Naive thymus-derived CD4-positive, alpha-beta T cell (primary cell): ENCODE measurements at regions of chr5 and their contacts with region 1.

Region 1: DNA sequence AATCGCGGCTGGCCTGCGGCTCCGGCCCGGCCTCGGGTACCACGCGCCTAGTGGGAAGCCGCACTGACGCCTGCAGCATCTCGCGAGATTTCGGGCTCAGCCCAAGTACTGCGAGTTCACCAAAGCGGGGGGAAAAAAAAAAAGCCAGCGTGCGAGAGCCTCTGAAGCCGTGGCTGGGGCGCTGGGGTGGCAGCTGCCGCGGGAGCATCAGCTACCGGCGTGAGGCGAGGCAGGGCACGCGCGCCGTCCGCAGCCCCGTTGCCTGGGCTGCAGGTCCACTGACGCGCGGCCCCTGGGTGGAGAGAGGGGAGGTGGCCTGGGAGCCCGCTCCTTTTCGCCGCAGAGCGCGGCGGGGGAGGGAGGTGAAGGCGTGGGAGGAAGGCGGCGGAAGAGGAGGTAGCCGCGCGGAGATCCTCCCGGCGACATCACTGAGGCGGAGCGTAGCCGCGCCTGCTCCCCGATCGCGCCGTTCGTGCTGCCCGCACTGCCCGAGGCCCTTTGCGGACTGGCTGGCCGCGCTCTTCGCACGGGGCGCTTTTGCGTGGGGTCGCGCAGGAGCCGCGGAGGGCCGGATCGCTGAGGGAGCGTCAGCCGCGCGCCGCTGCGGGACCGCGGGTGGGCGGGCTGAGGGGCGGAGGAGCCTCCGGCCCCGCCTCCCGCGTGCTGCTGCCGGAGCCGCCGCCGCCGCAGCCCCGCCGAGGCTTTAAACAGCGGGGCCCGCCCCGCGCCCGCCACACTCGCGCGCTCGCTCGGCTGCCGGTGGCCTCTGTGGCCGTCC is at the start of gene SLC12A2:
- DNase-seq: peak; percentile 85 to 98 (median 97)
- ATAC-seq: peak; percentile 83
- H3K4me3 ChIP-seq: peak within 1 kb of the TSS; percentile 76
- H3K4me3 Mint-ChIP-seq: peak within 1 kb of the TSS; percentile 89 to 97 (median 94)
- H3K27ac ChIP-seq: peak within 1 kb of the TSS; percentile 89
- H3K27ac Mint-ChIP-seq: peak within 1 kb of the TSS; percentile 89 to 98 (median 92)
- H3K4me1 ChIP-seq: peaks cover 20 to 41% of the 10 kb centered on the region in 2 donors
- H3K4me1 Mint-ChIP-seq: peaks cover 44 to 78% (median 69%) of the 10 kb centered on the region in 7 donors
- H3K27me3 ChIP-seq: no peaks in the 10 kb centered on the region
- H3K27me3 Mint-ChIP-seq: no peaks in the 10 kb centered on the region
- total RNA-seq, gene SLC12A2: 8.2 to 17.3 (median 11.3) TPM

Region 2: DNA sequence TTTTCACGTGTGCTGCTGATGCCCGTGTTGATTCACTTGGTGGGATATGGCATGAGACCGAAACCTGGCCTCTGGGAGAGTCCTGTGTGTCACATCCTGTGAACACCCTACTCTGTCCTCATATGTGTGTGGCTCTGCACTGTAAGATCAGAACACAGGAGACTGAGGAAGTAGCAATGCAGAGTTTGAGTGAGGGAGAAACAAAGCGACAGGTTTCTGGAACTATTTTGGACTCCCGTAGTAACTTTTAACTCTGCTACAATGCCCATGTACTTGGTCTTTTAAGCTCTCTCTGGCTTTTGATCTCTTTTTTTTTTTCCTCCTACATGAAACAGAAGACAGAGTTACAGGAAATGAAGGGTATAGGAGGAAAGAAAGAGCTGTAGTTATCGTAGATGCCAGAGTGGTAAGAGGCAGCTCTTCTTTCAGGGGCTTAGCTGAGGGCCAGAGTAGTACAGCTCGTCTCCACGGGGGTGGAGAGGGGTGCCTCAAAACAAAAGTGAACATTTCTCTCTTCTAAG is 1633.4 kb before region 1 on chr5:
- CTCF ChIA-PET with region 1: no interaction called
- POLR2A ChIA-PET with region 1: interaction called, 3 read pairs
- intact Hi-C with region 1: loop called in 1 of 2 experiments (anchors 10 kb)
- DNase-seq: peak in 8 of 9 donors; percentile 48 to 75 (median 64)
- ATAC-seq: peak; percentile 87
- H3K4me3 ChIP-seq: peak overlapping the region; percentile 47
- H3K4me3 Mint-ChIP-seq: peak overlapping the region; percentile 75 to 94 (median 88)
- H3K27ac ChIP-seq: peak overlapping the region; percentile 77
- H3K27ac Mint-ChIP-seq: peak overlapping the region; percentile 96 to 100 (median 99)
- H3K4me1 ChIP-seq: peaks cover 11 to 57% of the 10 kb centered on the region in 2 donors
- H3K4me1 Mint-ChIP-seq: peaks cover 32 to 90% (median 75%) of the 10 kb centered on the region in 7 donors
- H3K27me3 ChIP-seq: no peaks in the 10 kb centered on the region
- H3K27me3 Mint-ChIP-seq: no peaks in the 10 kb centered on the region

Region 3: GRCh38 chr5:126745259-126745992 is 1337.8 kb before region 1 on chr5:
- CTCF ChIA-PET with region 1: no interaction called
- POLR2A ChIA-PET with region 1: no interaction called
- intact Hi-C with region 1: loop called in 1 of 2 experiments (anchors 10 kb)
- DNase-seq: no peak
- ATAC-seq: no peak
- H3K4me3 ChIP-seq: no peak overlapping the region
- H3K4me3 Mint-ChIP-seq: no peak overlapping the region
- H3K27ac ChIP-seq: no peak overlapping the region
- H3K27ac Mint-ChIP-seq: peak overlapping the region in 1 of 9 donors; percentile 26
- H3K4me1 ChIP-seq: peaks cover 4 to 13% of the 10 kb centered on the region in 2 donors
- H3K4me1 Mint-ChIP-seq: peaks cover 11 to 30% (median 19%) of the 10 kb centered on the region in 7 donors
- H3K27me3 ChIP-seq: no peaks in the 10 kb centered on the region
- H3K27me3 Mint-ChIP-seq: peaks cover 0 to 4% (median 0%) of the 10 kb centered on the region in 5 donors

Region 4: DNA sequence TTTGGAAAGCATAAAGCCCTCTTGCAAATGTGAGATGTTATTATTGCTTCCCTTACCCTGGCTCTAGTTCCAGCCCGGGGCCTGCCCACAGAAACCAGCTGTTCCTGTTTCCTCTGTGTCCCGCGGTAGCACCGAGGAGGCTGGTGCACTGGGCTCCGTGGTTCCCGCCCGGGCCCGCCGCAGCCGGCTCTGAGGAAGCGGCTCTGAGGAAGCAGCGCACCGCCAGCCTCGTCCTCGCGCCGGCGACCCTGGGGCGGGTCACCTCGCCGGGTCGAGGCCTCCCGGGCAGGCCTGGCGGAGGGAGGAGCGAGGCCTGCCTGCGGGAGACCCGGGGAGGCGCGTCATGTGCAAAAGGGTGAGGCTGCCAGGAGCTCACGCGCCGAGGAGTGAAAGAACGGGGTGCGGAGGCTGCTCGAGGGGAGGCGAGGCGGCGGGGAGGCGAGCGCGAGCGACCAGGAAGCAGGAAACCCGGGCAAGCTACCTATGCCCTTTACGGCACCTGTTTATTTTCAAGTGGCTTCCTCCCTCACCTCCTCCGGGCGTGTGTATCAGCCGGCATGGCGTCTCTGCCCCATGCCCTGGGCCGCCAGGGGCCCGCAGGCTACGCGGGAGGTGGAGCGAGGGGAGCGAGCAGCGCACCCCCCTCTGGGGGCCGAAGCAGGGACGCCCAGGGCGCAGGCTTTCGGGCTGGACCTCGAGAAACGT is 853.9 kb before region 1 on chr5:
- CTCF ChIA-PET with region 1: no interaction called
- POLR2A ChIA-PET with region 1: no interaction called
- intact Hi-C with region 1: loop called in 1 of 2 experiments (anchors 2 kb)
- DNase-seq: peak; percentile 28 to 68 (median 64)
- ATAC-seq: peak; percentile 83
- H3K4me3 ChIP-seq: peak overlapping the region; percentile 66
- H3K4me3 Mint-ChIP-seq: peak overlapping the region; percentile 73 to 88 (median 80)
- H3K27ac ChIP-seq: peak overlapping the region; percentile 62
- H3K27ac Mint-ChIP-seq: peak overlapping the region; percentile 36 to 88 (median 84)
- H3K4me1 ChIP-seq: peaks cover 0 to 15% of the 10 kb centered on the region in 2 donors
- H3K4me1 Mint-ChIP-seq: peaks cover 7 to 28% (median 18%) of the 10 kb centered on the region in 7 donors
- H3K27me3 ChIP-seq: no peaks in the 10 kb centered on the region
- H3K27me3 Mint-ChIP-seq: peaks cover 0 to 5% (median 0%) of the 10 kb centered on the region in 5 donors

Region 5: DNA sequence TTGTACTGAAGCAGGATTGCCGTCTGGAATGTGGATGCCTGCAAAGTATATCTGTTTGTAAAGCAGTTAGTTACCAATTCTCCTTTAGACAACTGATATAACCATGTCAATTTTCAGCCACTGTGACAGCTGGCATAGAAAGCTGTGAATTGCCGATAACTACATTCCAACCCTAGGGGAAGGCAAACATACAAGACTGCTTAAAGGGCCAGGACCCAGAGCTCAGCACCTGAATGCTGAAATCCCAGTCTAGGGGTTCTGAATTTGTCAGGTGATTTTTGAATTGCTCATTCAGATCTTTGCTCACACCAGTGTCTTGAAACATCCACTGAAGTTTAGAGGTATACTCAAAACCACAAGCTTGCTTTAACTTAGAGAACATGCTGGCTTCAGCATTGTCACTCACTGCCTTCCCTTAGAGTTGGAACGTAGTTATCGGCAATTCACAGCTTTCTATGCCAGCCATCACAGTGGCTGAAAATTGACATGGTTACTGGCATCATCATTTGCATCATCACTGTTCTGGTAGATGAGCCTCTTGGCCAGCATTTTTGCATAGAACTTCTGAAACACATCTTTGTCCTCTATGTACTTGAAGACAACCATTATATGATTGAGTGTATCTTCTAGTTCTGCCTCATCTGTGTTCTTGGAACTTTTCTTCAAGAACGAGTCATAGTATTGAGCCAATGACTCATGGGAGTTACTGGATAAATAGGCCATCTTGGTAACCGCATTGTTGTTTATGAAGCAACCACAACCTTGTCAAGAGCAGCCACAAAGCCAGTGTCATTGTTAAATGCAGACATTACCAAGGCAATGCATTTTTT is 297.9 kb before region 1 on chr5:
- CTCF ChIA-PET with region 1: no interaction called
- POLR2A ChIA-PET with region 1: no interaction called
- intact Hi-C with region 1: loop called in 1 of 2 experiments (anchors 1 kb)
- DNase-seq: peak in 1 of 9 donors; percentile 34
- ATAC-seq: peak; percentile 79
- H3K4me3 ChIP-seq: no peak overlapping the region
- H3K4me3 Mint-ChIP-seq: peak overlapping the region in 1 of 10 donors; percentile 73
- H3K27ac ChIP-seq: no peak overlapping the region
- H3K27ac Mint-ChIP-seq: peak overlapping the region in 1 of 9 donors; percentile 96
- H3K4me1 ChIP-seq: peaks cover 0 to 4% of the 10 kb centered on the region in 2 donors
- H3K4me1 Mint-ChIP-seq: peaks cover 0 to 45% (median 0%) of the 10 kb centered on the region in 7 donors
- H3K27me3 ChIP-seq: no peaks in the 10 kb centered on the region
- H3K27me3 Mint-ChIP-seq: peaks cover 3 to 24% (median 16%) of the 10 kb centered on the region in 5 donors

Region 6: GRCh38 chr5:127849891-127850290 is 233.3 kb before region 1 on chr5:
- CTCF ChIA-PET with region 1: no interaction called
- POLR2A ChIA-PET with region 1: no interaction called
- intact Hi-C with region 1: no loop called
- DNase-seq: no peak
- ATAC-seq: no peak
- H3K4me3 ChIP-seq: no peak overlapping the region
- H3K4me3 Mint-ChIP-seq: no peak overlapping the region
- H3K27ac ChIP-seq: no peak overlapping the region
- H3K27ac Mint-ChIP-seq: no peak overlapping the region
- H3K4me1 ChIP-seq: no peaks in the 10 kb centered on the region
- H3K4me1 Mint-ChIP-seq: no peaks in the 10 kb centered on the region
- H3K27me3 ChIP-seq: no peaks in the 10 kb centered on the region
- H3K27me3 Mint-ChIP-seq: no peaks in the 10 kb centered on the region

Region 7: DNA sequence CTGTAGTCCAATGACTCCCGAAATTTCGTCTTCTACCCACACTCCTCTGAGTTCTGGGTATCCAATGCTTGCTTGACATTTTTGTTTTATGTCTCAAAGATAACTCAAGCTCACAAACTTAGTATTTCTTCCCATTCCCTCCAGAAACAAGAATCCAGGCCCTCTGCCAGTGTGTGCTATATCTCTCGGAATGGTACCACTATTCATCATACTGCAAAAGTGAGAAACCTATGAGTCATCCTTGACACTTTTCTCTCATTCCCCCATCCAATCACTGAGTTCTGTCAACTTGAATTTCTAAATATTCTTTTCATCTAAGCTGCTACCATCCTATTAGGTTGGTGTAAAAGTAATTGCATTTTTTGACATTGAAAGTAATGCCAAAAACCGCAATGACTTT is 10.1 kb after region 1 on chr5:
- CTCF ChIA-PET with region 1: no interaction called
- POLR2A ChIA-PET with region 1: interaction called, 3 read pairs
- intact Hi-C with region 1: loop called in 1 of 2 experiments (anchors 1 kb)
- DNase-seq: no peak
- ATAC-seq: no peak
- H3K4me3 ChIP-seq: no peak overlapping the region
- H3K4me3 Mint-ChIP-seq: no peak overlapping the region
- H3K27ac ChIP-seq: no peak overlapping the region
- H3K27ac Mint-ChIP-seq: peak overlapping the region in 1 of 9 donors; percentile 26
- H3K4me1 ChIP-seq: no peaks in the 10 kb centered on the region
- H3K4me1 Mint-ChIP-seq: peaks cover 4 to 28% (median 21%) of the 10 kb centered on the region in 7 donors
- H3K27me3 ChIP-seq: no peaks in the 10 kb centered on the region
- H3K27me3 Mint-ChIP-seq: no peaks in the 10 kb centered on the region

Region 8: DNA sequence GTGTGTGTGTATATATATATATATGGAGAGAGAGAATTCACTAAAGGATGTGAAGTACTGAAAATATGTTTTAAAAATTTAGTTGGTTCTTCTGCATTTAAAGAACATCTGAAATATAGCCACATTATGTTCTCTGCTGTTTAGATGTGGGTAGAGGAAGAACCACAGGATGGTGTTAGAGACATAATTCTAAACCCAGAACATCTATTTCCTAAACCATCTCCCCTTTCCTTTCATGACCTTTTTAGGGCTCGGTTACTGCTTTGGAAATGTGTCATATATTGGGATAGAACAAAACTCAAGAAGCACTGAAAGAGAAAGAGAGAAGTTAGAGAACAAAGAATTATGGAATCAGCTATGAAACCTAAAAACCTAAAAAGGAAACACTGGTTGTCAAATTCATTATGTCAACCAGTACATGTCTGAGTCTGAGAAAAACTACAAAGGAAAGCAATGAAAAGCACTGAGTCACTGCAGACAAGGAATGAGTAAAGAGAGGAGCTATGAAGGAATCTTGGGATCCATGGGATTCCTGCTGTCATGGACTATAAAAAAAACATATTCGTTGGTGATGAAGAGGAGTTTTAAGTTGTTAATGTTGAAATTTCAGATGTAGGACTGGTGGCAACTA is 28.7 kb after region 1 on chr5:
- CTCF ChIA-PET with region 1: no interaction called
- POLR2A ChIA-PET with region 1: no interaction called
- intact Hi-C with region 1: no loop called
- DNase-seq: no peak
- ATAC-seq: no peak
- H3K4me3 ChIP-seq: no peak overlapping the region
- H3K4me3 Mint-ChIP-seq: no peak overlapping the region
- H3K27ac ChIP-seq: no peak overlapping the region
- H3K27ac Mint-ChIP-seq: no peak overlapping the region
- H3K4me1 ChIP-seq: no peaks in the 10 kb centered on the region
- H3K4me1 Mint-ChIP-seq: peaks cover 2 to 10% (median 9%) of the 10 kb centered on the region in 7 donors
- H3K27me3 ChIP-seq: no peaks in the 10 kb centered on the region
- H3K27me3 Mint-ChIP-seq: no peaks in the 10 kb centered on the region

Region 9: GRCh38 chr5:128201065-128201926 is 118.1 kb after region 1 on chr5:
- CTCF ChIA-PET with region 1: no interaction called
- POLR2A ChIA-PET with region 1: interaction called, 5 read pairs
- intact Hi-C with region 1: loop called (anchors 1 to 2 kb)
- DNase-seq: peak; percentile 68 to 90 (median 84)
- ATAC-seq: peak; percentile 87
- H3K4me3 ChIP-seq: peak overlapping the region; percentile 15
- H3K4me3 Mint-ChIP-seq: peak overlapping the region; percentile 9 to 77 (median 62)
- H3K27ac ChIP-seq: no peak overlapping the region
- H3K27ac Mint-ChIP-seq: peak overlapping the region in 7 of 9 donors; percentile 29 to 88 (median 75)
- H3K4me1 ChIP-seq: peaks cover 0 to 23% of the 10 kb centered on the region in 2 donors
- H3K4me1 Mint-ChIP-seq: peaks cover 21 to 51% (median 44%) of the 10 kb centered on the region in 7 donors
- H3K27me3 ChIP-seq: no peaks in the 10 kb centered on the region
- H3K27me3 Mint-ChIP-seq: peaks cover 0 to 9% (median 1%) of the 10 kb centered on the region in 5 donors